Common myeloid progenitor, CD34-positive (primary cell): ENCODE measurements at regions of chr12 and their contacts with region 1.

Region 1: GRCh38 chr12:4256043-4256826 is 17.3 kb upstream of the CCND2 start:
- DNase-seq: no peak
- H3K4me3 ChIP-seq: no peak overlapping the region
- H3K27ac ChIP-seq: no peak overlapping the region
- H3K4me1 ChIP-seq: peaks cover 0 to 8% (median 3%) of the 10 kb centered on the region in 4 experiments
- H3K27me3 ChIP-seq: no peaks in the 10 kb centered on the region

Region 2: DNA sequence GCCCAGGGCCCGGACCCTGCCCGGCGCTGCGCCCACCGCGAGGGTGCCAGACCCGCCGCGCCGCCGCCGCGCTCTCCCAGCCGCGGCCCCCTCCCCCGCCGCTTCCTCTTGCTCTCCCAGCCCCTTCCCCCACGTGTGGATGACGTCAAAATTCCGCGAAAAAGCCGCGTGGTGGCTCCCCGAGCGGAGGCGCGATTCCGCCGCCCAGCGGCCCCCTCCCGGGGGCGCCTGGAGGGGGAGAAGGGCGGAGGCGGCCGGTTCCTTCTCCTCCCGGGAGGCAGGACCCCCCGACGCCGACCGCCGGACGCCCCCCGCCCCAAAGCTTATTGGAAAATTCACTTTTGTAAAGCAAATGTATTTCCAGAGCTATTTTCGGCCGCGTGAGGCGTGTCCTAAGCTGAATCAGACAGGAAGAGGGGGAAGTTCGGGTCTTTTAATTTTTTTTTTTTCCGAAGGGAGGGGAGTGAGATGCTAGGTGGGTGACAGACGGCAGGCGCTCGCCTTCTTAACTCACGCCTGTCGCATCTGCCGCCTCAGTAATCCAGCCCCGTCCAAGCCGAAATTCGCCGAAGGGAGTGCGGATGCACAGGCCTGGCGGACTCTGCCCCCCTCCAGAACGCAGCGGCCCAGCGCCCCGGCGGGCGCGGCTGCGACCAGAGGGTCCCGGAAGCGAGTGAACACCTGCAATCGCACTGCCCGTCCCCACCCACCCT is 13.2 kb after region 1 on chr12:
- CTCF ChIA-PET with region 1: interaction called, 23 read pairs
- POLR2A ChIA-PET with region 1: no interaction called
- DNase-seq: peak; percentile 93 to 95 (median 94)
- H3K4me3 ChIP-seq: peak overlapping the region; percentile 60 to 96 (median 88)
- H3K27ac ChIP-seq: peak overlapping the region; percentile 85 to 95
- H3K4me1 ChIP-seq: peaks cover 5 to 55% (median 40%) of the 10 kb centered on the region in 4 experiments
- H3K27me3 ChIP-seq: no peaks in the 10 kb centered on the region